ENCODE measurements at regions of chr2 and their contacts with region 1.

Region 1: DNA sequence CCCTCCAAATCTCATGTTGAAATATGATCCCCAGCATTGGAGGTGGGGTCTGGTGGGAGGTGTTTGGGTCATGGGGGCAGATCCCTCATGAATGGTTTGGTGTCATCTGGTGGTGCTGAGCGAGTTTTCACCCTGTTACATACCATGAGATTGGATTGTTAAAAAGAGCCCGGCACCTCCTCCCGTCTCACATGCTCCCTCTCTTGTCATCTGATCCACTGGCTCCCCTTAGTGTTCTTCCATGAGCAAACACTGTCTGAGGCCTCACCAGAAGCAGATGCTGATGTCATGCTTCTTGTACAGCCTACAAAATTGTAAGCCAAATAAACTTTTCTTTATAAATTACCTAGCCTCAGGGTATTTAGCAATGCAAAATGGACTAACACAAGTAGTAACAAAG is 405.0 kb upstream of the SLC39A10 start:
- DNase-seq: no peak
- ATAC-seq: no peak
- H3K4me3 ChIP-seq: no peak overlapping the region
- H3K27ac ChIP-seq: no peak overlapping the region
- H3K4me1 ChIP-seq: no peaks in the 10 kb centered on the region
- H3K27me3 ChIP-seq: no peaks in the 10 kb centered on the region
- CTCF ChIP-seq: no peak
- POLR2A ChIP-seq: no peak
- RAD21 ChIP-seq: no peak

Region 2: DNA sequence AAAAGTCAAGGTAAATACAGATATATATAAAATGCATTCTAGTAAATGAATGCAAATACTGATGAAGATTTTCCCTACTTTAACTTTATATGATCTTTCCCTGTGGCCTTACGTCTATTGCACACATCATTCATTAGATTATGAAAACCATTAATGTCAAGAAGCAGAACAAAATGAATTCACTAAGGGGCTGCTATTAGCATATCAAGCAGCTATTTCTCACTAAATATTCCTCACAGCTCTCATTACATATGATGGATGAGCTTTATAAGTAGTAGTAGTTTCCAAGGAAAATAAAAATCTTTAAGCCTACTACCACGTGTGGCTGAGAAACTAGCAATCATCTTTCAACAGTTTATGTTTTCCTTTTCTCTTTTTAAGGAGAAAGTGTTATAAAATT is 297.8 kb before region 1 on chr2:
- CTCF ChIA-PET with region 1: no interaction called
- POLR2A ChIA-PET with region 1: no interaction called
- RAD21 ChIA-PET with region 1: no interaction called
- intact Hi-C with region 1: loop called (anchors 10 kb)
- DNase-seq: no peak
- ATAC-seq: no peak
- H3K4me3 ChIP-seq: no peak overlapping the region
- H3K27ac ChIP-seq: no peak overlapping the region
- H3K4me1 ChIP-seq: no peaks in the 10 kb centered on the region
- H3K27me3 ChIP-seq: no peaks in the 10 kb centered on the region
- CTCF ChIP-seq: no peak
- POLR2A ChIP-seq: no peak
- RAD21 ChIP-seq: no peak

Measured in HCT116 (cell line).